Caco-2 (cell line): ENCODE measurements at regions of chr5 and their contacts with region 1.

Region 1: DNA sequence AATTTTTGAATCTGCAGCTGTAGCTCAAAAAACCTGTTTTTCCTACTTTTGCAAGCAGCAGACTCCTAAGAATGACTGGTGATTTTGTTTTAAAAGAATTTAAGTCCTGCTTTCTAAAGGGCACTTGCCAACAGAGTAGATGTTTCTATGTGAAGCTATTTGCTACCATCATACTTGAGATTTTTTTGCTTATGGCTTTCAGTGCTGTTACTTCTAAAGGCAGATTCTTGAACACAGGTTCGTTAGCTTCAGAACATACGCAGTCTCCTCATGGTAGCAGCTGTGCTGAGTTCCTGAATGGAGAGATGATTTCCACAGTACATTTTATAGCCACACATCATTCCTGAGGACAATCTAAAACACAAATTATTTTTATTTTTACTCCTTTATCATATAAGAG is 24.4 kb upstream of the ELL2 start:
- DNase-seq: no peak
- H3K4me3 ChIP-seq: no peak overlapping the region
- H3K4me3 Mint-ChIP-seq: no peak overlapping the region
- H3K27ac Mint-ChIP-seq: peak overlapping the region; percentile 85
- H3K4me1 ChIP-seq: peaks cover 74% of the 10 kb centered on the region
- H3K4me1 Mint-ChIP-seq: peaks cover 9% of the 10 kb centered on the region
- H3K27me3 ChIP-seq: no peaks in the 10 kb centered on the region
- H3K27me3 Mint-ChIP-seq: no peaks in the 10 kb centered on the region
- CTCF ChIP-seq: no peak

Region 2: DNA sequence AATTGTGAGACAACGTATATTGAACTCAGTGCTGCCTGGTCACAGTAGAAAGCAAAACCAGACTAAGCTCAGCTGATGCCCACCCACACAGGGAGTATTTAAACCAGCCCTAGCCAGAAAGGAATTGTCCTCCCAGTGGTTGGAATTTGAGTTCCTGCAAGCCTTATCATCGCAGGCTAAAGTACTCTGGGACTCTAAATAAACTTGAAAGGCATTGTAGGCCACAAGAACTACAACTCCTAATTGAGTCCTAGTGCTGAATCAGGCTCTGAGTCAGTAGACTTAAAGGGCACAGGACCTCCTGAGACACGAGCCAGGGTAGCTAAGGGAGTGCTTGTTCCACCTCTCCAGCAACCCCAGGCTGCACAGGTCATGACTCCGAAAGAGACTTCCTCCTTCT is 872.5 kb before region 1 on chr5:
- CTCF ChIA-PET with region 1: no interaction called
- POLR2A ChIA-PET with region 1: no interaction called
- intact Hi-C with region 1: no loop called
- DNase-seq: peak; percentile 36 to 39
- H3K4me3 ChIP-seq: no peak overlapping the region
- H3K4me3 Mint-ChIP-seq: no peak overlapping the region
- H3K27ac Mint-ChIP-seq: no peak overlapping the region
- H3K4me1 ChIP-seq: peaks cover 14% of the 10 kb centered on the region
- H3K4me1 Mint-ChIP-seq: no peaks in the 10 kb centered on the region
- H3K27me3 ChIP-seq: no peaks in the 10 kb centered on the region
- H3K27me3 Mint-ChIP-seq: no peaks in the 10 kb centered on the region
- CTCF ChIP-seq: peak in 1 of 2 experiments; percentile 8

Region 3: GRCh38 chr5:95727764-95728191 is 258.2 kb before region 1 on chr5:
- CTCF ChIA-PET with region 1: no interaction called
- POLR2A ChIA-PET with region 1: no interaction called
- intact Hi-C with region 1: no loop called
- DNase-seq: peak; percentile 61 to 62
- H3K4me3 ChIP-seq: no peak overlapping the region
- H3K4me3 Mint-ChIP-seq: peak overlapping the region; percentile 30
- H3K27ac Mint-ChIP-seq: peak overlapping the region; percentile 94
- H3K4me1 ChIP-seq: peaks cover 60% of the 10 kb centered on the region
- H3K4me1 Mint-ChIP-seq: peaks cover 44% of the 10 kb centered on the region
- H3K27me3 ChIP-seq: no peaks in the 10 kb centered on the region
- H3K27me3 Mint-ChIP-seq: no peaks in the 10 kb centered on the region
- CTCF ChIP-seq: no peak

Region 4: DNA sequence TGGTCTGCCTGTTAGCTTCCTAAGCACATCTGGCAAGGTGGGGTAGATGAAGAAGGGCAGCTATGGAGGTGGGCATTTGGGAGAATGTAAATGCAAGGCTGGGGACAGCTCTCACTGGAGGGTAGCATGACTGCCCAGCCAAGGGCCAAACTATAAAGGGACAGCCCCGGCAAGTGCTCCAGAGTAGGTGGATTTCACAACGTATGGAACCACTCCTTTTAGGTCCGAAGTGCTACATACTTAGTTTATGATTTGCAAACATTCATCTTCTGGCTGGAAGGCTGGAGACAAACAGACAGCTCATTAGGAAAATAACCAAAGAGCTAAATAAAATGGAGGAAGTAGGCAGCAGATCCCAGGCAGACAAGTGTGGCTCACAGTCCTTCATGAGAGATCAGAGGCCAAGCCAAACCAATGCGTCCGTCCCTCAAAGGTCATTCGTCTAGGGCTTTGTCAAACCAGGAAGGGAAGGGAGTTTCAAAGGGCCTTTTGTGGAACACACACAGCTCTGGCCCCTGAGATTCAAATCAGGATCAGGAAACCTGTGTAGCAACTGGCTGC is 121.0 kb before region 1 on chr5:
- CTCF ChIA-PET with region 1: no interaction called
- POLR2A ChIA-PET with region 1: no interaction called
- intact Hi-C with region 1: loop called (anchors 1 kb)
- DNase-seq: peak; percentile 75 to 88
- H3K4me3 ChIP-seq: no peak overlapping the region
- H3K4me3 Mint-ChIP-seq: peak overlapping the region; percentile 6
- H3K27ac Mint-ChIP-seq: peak overlapping the region; percentile 77
- H3K4me1 ChIP-seq: peaks cover 53% of the 10 kb centered on the region
- H3K4me1 Mint-ChIP-seq: peaks cover 39% of the 10 kb centered on the region
- H3K27me3 ChIP-seq: no peaks in the 10 kb centered on the region
- H3K27me3 Mint-ChIP-seq: no peaks in the 10 kb centered on the region
- CTCF ChIP-seq: no peak

Region 5: DNA sequence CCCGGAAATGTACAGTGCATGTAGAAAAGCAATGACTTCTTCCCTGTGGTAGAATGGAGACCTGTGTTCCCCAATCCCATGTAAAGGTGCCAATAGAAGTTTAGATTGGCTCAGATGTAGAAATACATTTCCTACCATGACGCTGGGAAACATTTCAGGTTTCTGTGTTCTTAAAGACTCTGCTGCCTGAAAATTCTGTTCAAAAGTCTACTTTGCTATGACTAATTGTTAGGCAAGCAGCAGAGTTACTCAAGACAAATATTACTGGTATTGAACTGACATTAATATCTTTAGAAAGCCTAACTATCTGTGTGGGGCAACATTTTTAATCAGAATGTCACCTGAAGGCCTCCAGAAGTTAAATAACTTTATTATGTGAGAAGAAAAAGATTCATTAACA is 51.1 kb after region 1 on chr5:
- CTCF ChIA-PET with region 1: no interaction called
- POLR2A ChIA-PET with region 1: no interaction called
- intact Hi-C with region 1: loop called (anchors 5 kb)
- DNase-seq: no peak
- H3K4me3 ChIP-seq: no peak overlapping the region
- H3K4me3 Mint-ChIP-seq: no peak overlapping the region
- H3K27ac Mint-ChIP-seq: no peak overlapping the region
- H3K4me1 ChIP-seq: no peaks in the 10 kb centered on the region
- H3K4me1 Mint-ChIP-seq: peaks cover 7% of the 10 kb centered on the region
- H3K27me3 ChIP-seq: no peaks in the 10 kb centered on the region
- H3K27me3 Mint-ChIP-seq: no peaks in the 10 kb centered on the region
- CTCF ChIP-seq: no peak

Region 6: GRCh38 chr5:96187309-96188027 is 201.5 kb after region 1 on chr5:
- CTCF ChIA-PET with region 1: no interaction called
- POLR2A ChIA-PET with region 1: no interaction called
- intact Hi-C with region 1: loop called (anchors 1 kb)
- DNase-seq: peak; percentile 65 to 73
- H3K4me3 ChIP-seq: no peak overlapping the region
- H3K4me3 Mint-ChIP-seq: peak overlapping the region; percentile 39
- H3K27ac Mint-ChIP-seq: peak overlapping the region; percentile 44
- H3K4me1 ChIP-seq: peaks cover 16% of the 10 kb centered on the region
- H3K4me1 Mint-ChIP-seq: peaks cover 44% of the 10 kb centered on the region
- H3K27me3 ChIP-seq: no peaks in the 10 kb centered on the region
- H3K27me3 Mint-ChIP-seq: no peaks in the 10 kb centered on the region
- CTCF ChIP-seq: no peak

Region 7: GRCh38 chr5:96336351-96336985 is 350.5 kb after region 1 on chr5:
- CTCF ChIA-PET with region 1: interaction called, 4 read pairs
- POLR2A ChIA-PET with region 1: no interaction called
- intact Hi-C with region 1: loop called (anchors 1 kb)
- DNase-seq: peak; percentile 78 to 79
- H3K4me3 ChIP-seq: no peak overlapping the region
- H3K4me3 Mint-ChIP-seq: no peak overlapping the region
- H3K27ac Mint-ChIP-seq: no peak overlapping the region
- H3K4me1 ChIP-seq: peaks cover 40% of the 10 kb centered on the region
- H3K4me1 Mint-ChIP-seq: peaks cover 39% of the 10 kb centered on the region
- H3K27me3 ChIP-seq: no peaks in the 10 kb centered on the region
- H3K27me3 Mint-ChIP-seq: no peaks in the 10 kb centered on the region
- CTCF ChIP-seq: peak; percentile 84 to 93